Panc1 (cell line): ENCODE measurements at regions of chr2 and their contacts with region 1.

Region 1: GRCh38 chr2:171160956-171161740 is 455 bp upstream of the TLK1 start:
- DNase-seq: no peak
- ATAC-seq: peak; percentile 82
- H3K4me3 ChIP-seq: peak overlapping the region; percentile 86 to 99
- H3K27ac ChIP-seq: peak overlapping the region; percentile 96
- H3K4me1 ChIP-seq: peaks cover 16% of the 10 kb centered on the region
- H3K27me3 ChIP-seq: no peaks in the 10 kb centered on the region
- CTCF ChIP-seq: peak; percentile 38

Region 2: DNA sequence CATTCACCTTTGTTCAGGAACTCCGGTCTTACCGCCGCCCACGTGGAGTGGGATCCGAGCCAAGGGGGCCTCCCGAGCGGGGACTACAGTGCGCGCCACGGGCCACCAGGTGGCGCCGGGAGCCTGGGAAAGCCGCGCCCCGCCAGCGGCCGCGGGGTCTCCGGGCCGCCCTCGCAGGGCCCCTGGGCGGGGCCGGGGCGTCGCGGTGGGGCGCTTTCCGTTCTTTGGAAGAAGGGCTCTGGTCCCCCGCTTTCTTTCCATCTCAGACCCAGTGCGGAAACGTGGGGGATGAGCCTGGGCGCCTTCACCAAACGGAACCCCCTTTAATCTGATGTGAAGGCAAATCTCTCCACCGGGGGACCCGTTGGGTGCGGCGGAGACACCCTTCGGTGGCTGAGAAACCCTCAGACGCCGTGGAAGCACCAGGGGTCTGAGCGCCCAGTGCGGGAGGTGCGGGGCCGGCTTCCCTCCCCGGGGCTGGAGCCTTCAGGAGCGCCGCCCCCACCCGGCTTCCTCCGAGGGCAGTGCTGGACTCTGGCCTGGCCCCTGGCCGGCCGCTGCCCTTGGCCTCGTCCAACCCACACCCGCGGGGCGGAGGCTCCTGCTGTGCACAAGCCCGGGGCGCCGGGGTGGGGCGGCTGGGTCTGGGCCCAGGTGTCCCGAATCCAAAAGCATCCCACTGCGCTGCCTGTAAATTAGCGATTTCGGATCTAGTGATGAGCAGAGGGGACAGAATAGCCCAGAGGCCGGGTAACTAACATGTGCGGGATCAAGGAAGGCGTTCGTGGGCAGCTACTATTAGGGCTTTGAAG is 187.4 kb before region 1 on chr2:
- CTCF ChIA-PET with region 1: no interaction called
- POLR2A ChIA-PET with region 1: no interaction called
- in situ Hi-C with region 1: no loop called
- intact Hi-C with region 1: loop called (anchors 10 kb)
- DNase-seq: peak; percentile 47
- ATAC-seq: peak; percentile 95
- H3K4me3 ChIP-seq: peak overlapping the region; percentile 69 to 84
- H3K27ac ChIP-seq: peak overlapping the region; percentile 45
- H3K4me1 ChIP-seq: peaks cover 15% of the 10 kb centered on the region
- H3K27me3 ChIP-seq: no peaks in the 10 kb centered on the region
- CTCF ChIP-seq: peak; percentile 98

Region 3: GRCh38 chr2:171187819-171188218 is 26.7 kb after region 1 on chr2:
- CTCF ChIA-PET with region 1: interaction called, 11 read pairs
- POLR2A ChIA-PET with region 1: no interaction called
- in situ Hi-C with region 1: no loop called
- intact Hi-C with region 1: no loop called
- DNase-seq: no peak
- ATAC-seq: no peak
- H3K4me3 ChIP-seq: no peak overlapping the region
- H3K27ac ChIP-seq: no peak overlapping the region
- H3K4me1 ChIP-seq: no peaks in the 10 kb centered on the region
- H3K27me3 ChIP-seq: no peaks in the 10 kb centered on the region
- CTCF ChIP-seq: no peak

Region 4: GRCh38 chr2:171416009-171416926 is 255.1 kb after region 1 on chr2:
- CTCF ChIA-PET with region 1: interaction called, 4 read pairs
- POLR2A ChIA-PET with region 1: no interaction called
- in situ Hi-C with region 1: no loop called
- intact Hi-C with region 1: loop called (anchors 5 kb)
- DNase-seq: peak; percentile 89
- ATAC-seq: peak; percentile 100
- H3K4me3 ChIP-seq: no peak overlapping the region
- H3K27ac ChIP-seq: peak overlapping the region; percentile 48; the same call in 1 of the 2 replicates
- H3K4me1 ChIP-seq: peaks cover 9% of the 10 kb centered on the region
- H3K27me3 ChIP-seq: no peaks in the 10 kb centered on the region
- CTCF ChIP-seq: peak; percentile 92